ENCODE measurements at regions of chr5 and their contacts with region 1.

Region 1: DNA sequence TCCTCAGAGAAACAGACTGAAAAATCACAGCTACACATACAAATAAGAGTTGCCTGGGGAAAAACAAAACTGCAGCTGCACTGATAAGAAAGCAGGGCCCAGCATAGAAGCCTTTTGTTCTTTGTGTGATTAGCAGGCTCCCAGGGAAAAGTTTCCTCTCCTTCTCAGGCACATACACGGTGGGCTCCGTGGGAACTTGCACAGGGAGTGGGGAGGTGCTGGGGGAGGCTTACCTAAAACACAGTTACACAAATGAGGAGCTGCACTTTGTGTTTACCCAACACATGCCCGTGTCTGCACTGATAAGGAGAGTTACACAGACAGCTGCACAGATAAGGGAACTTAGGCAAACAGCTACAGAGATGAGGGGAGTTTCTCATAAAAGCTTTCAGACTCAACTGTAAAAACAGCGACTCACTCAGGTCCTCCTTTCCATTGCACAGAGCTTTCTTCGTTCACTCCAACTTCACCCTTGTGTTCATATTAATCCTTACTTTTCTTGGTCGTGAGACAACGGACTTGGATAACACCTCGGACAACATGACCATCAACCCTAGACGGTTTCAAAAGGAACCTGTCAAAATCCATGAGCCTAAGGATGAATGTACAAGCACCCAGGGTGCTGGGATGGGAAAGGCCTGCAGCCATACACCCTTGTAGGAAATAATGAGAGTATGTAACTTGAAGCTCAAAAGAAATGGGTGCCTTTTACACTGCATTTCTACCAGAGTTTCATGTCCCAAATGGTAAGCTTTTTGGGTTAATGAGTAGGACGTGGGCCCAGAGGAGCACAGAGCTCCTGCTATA is 50.8 kb downstream of the SERINC5 start:
- DNase-seq: peak in 2 of 10 donors; percentile 48 to 53
- ATAC-seq: peak; percentile 77 to 90
- H3K4me3 Mint-ChIP-seq: peak overlapping the region; percentile 49 to 82 (median 58)
- H3K27ac Mint-ChIP-seq: peak overlapping the region; percentile 84 to 96 (median 92)
- H3K4me1 Mint-ChIP-seq: peaks cover 43 to 92% (median 88%) of the 10 kb centered on the region in 4 donors
- H3K27me3 Mint-ChIP-seq: no peaks in the 10 kb centered on the region

Region 2: GRCh38 chr5:80141147-80141671 is 63.8 kb before region 1 on chr5:
- POLR2A ChIA-PET with region 1: interaction called, 15 read pairs
- DNase-seq: no peak
- ATAC-seq: no peak
- H3K4me3 Mint-ChIP-seq: peak overlapping the region in 8 of 10 donors; percentile 22 to 78 (median 63)
- H3K27ac Mint-ChIP-seq: peak overlapping the region; percentile 87 to 97 (median 90)
- H3K4me1 Mint-ChIP-seq: peaks cover 38 to 92% (median 82%) of the 10 kb centered on the region in 4 donors
- H3K27me3 Mint-ChIP-seq: no peaks in the 10 kb centered on the region

Region 3: DNA sequence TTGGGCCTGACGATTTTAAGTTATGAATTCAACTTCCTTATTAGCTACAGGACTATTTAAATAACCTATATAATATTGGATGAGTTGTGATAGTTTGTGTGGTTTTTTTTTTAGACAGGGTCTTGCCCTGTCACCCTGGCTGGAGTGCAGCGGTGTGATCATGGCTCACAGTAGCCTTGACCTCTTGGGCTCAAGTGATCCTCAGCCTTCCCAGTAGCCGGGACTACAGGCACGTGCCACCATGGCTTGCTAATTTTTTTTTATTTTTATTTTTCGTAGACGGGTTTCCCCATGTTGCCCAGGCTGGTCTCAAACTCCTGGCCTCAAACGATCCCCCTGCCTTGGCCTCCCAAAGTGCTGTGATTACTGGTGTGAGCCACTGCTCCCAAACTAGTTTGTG is 132.4 kb after region 1 on chr5:
- POLR2A ChIA-PET with region 1: no interaction called
- DNase-seq: no peak
- ATAC-seq: no peak
- H3K4me3 Mint-ChIP-seq: no peak overlapping the region
- H3K27ac Mint-ChIP-seq: peak overlapping the region in 1 of 10 donors; percentile 14
- H3K4me1 Mint-ChIP-seq: no peaks in the 10 kb centered on the region
- H3K27me3 Mint-ChIP-seq: peaks cover 13 to 27% (median 20%) of the 10 kb centered on the region in 5 donors

Measured in naive thymus-derived CD8-positive, alpha-beta T cell (primary cell).